Activated B cell treated with CpG ODN at 0.5 μM for 24 hours (primary cell): ENCODE measurements at regions of chr22 and their contacts with region 1.

Region 1: DNA sequence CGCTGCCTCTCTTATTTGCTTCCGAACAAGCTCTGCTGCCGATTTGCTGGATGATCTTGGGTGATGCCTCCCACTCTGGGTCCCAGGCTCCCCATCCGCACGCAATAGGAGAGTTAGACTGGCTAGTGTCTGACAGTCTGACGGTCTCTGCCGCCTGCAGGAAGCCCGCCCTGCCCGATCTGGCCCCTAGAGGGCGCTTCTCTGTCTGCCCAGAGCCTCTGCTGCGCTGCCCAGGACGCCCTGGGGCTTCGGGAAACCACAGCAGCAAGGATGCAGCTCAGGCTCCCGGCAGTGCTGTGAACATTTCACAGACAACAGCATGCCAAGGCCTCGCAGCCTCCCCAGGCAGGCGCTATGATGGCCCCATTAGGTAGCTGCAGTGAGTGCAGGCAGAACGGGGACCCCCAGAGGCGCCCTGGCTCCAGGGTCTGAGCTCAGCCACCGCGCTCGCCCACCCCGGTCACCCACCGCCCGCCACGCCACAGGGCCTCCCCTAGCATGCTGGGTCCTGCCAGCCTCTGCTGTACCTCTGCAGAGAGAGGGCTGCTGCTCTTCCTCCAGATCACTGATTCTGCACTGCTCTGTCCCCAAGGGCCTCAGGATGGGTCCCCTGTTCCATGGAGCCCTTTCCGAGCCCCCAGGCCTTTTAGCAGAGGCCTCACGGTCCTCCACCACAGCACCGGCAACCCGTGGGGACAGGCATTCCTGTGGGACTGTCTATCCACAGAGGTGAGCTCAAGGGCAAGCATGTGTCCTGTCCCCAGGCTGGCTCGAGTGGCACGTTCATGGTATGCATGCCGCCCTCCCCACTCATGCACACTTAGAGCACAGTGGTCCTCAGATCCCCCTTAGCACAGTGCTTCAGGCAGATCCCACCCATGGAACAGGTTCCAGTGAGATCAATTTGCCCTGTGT is 4.3 kb upstream of the BAIAP2L2 start:
- DNase-seq: peak; percentile 72
- ATAC-seq: peak; percentile 89
- H3K4me3 Mint-ChIP-seq: no peak overlapping the region
- H3K27ac Mint-ChIP-seq: no peak overlapping the region
- H3K4me1 Mint-ChIP-seq: no peaks in the 10 kb centered on the region
- H3K27me3 Mint-ChIP-seq: no peaks in the 10 kb centered on the region
- CTCF ChIP-seq: peak; percentile 65

Region 2: DNA sequence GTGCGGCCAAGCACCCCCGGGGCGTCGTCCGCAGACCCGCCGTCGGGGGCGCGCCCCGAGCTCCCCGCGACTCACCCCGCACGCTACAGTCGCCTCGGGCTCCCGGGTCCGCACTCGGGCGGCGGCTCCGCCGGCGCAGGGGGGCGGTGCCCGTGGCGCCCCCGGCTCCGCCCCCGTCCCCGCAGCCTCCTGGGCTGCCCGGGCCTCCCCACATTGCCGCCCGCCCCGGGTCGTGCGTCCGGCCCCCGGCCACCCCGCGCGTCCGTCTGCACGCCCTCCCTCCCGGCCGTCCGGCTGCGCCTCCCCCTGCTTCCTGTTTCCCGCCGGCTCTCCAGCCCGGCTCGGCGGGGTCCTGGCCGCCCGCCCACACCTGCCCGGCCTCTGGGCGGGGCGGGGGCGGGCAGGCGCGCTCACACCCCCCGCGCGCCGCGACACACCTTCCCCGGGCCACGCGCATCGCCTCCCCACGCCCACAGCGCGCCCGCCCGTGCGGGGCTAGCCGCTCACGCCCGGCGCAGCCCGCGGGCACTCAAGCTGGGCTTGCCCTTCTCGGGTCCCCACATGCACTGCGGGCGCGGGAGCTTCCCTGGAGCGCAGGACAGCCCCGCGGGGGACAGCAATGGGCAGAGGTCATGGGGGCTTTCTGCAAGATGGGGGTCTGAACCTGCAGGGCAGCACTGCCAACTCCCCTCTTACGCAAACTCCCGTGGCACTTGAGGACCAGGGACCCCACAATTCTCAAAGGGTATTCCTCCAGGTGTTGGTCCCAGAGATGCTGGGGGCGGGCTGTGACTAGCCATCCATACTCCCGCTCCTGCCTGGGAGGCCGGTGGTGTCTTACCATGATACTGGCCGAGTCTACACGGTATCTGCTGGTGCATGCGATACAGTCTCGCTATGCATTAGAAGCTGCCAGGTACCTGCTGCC is 595.2 kb before region 1 on chr22 and contains the start of gene CARD10:
- CTCF ChIA-PET with region 1: no interaction called
- POLR2A ChIA-PET with region 1: no interaction called
- intact Hi-C with region 1: no loop called
- DNase-seq: peak; percentile 21
- ATAC-seq: peak; percentile 74
- H3K4me3 Mint-ChIP-seq: peak within 1 kb of the TSS; percentile 55
- H3K27ac Mint-ChIP-seq: no peak within 1 kb of the TSS
- H3K4me1 Mint-ChIP-seq: peaks cover 4% of the 10 kb centered on the region
- H3K27me3 Mint-ChIP-seq: peaks cover 40% of the 10 kb centered on the region
- CTCF ChIP-seq: no peak
- total RNA-seq, gene CARD10: not detected in 2 replicates

Region 3: GRCh38 chr22:37999956-38000272 is 114.8 kb before region 1 on chr22:
- CTCF ChIA-PET with region 1: no interaction called
- POLR2A ChIA-PET with region 1: no interaction called
- intact Hi-C with region 1: no loop called
- DNase-seq: no peak
- ATAC-seq: peak; percentile 64
- H3K4me3 Mint-ChIP-seq: no peak overlapping the region
- H3K27ac Mint-ChIP-seq: no peak overlapping the region
- H3K4me1 Mint-ChIP-seq: peaks cover 25% of the 10 kb centered on the region
- H3K27me3 Mint-ChIP-seq: no peaks in the 10 kb centered on the region
- CTCF ChIP-seq: no peak

Region 4: GRCh38 chr22:38214256-38215056 is 99.7 kb after region 1 on chr22:
- CTCF ChIA-PET with region 1: interaction called, 6 read pairs
- POLR2A ChIA-PET with region 1: no interaction called
- intact Hi-C with region 1: loop called (anchors 5 kb)
- DNase-seq: peak; percentile 68
- ATAC-seq: peak; percentile 89
- H3K4me3 Mint-ChIP-seq: peak overlapping the region; percentile 71
- H3K27ac Mint-ChIP-seq: peak overlapping the region; percentile 18
- H3K4me1 Mint-ChIP-seq: peaks cover 24% of the 10 kb centered on the region
- H3K27me3 Mint-ChIP-seq: no peaks in the 10 kb centered on the region
- CTCF ChIP-seq: no peak

Region 5: DNA sequence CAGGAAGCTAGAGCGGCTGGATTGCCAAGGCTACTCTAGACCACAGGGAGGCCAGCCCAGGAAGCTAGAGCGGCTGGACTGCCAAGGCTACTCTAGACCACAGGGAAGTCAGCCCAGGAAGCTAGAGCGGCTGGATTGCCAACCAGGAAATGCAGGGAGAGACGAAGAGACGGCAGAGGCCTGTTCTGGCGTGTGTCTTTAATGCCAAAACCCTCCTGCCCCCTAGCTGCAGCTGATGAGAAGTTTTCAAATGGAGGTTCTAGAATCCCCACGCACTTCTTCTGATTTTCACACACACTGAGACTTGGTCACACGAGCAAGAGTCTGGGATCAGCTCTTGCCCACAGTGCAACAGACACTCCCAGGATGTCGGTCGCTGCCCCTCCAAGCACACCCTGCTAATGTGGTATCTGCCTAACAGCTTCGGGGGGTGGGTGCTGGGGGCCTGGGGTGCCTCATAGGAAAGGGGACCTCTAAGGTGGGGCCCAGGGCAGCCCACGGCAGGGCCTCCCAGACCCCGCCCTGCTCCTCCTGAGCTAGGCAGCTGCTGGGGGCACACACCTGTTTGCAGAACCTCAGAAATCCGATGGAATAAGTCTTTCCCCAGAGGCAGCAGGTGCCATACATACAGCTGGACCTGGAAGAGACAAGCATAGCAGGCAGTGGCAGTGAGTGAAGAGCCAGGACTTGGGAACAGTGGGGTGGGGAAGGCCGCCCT is 115.5 kb after region 1 on chr22:
- CTCF ChIA-PET with region 1: no interaction called
- POLR2A ChIA-PET with region 1: no interaction called
- intact Hi-C with region 1: loop called (anchors 1 kb)
- DNase-seq: no peak
- ATAC-seq: peak; percentile 50
- H3K4me3 Mint-ChIP-seq: no peak overlapping the region
- H3K27ac Mint-ChIP-seq: no peak overlapping the region
- H3K4me1 Mint-ChIP-seq: no peaks in the 10 kb centered on the region
- H3K27me3 Mint-ChIP-seq: no peaks in the 10 kb centered on the region
- CTCF ChIP-seq: no peak